Prostate gland (tissue), 2 donors: ENCODE measurements at regions of chrX and their contacts with region 1.

Region 1: GRCh38 chrX:2145692-2146367 is 354.9 kb downstream of the DHRSX start:
- DNase-seq: no peak
- H3K4me3 ChIP-seq: no peak overlapping the region
- H3K27ac ChIP-seq: no peak overlapping the region
- H3K4me1 ChIP-seq: no peaks in the 10 kb centered on the region
- H3K27me3 ChIP-seq: no peaks in the 10 kb centered on the region
- CTCF ChIP-seq: no peak
- POLR2A ChIP-seq: no peak

Region 2: DNA sequence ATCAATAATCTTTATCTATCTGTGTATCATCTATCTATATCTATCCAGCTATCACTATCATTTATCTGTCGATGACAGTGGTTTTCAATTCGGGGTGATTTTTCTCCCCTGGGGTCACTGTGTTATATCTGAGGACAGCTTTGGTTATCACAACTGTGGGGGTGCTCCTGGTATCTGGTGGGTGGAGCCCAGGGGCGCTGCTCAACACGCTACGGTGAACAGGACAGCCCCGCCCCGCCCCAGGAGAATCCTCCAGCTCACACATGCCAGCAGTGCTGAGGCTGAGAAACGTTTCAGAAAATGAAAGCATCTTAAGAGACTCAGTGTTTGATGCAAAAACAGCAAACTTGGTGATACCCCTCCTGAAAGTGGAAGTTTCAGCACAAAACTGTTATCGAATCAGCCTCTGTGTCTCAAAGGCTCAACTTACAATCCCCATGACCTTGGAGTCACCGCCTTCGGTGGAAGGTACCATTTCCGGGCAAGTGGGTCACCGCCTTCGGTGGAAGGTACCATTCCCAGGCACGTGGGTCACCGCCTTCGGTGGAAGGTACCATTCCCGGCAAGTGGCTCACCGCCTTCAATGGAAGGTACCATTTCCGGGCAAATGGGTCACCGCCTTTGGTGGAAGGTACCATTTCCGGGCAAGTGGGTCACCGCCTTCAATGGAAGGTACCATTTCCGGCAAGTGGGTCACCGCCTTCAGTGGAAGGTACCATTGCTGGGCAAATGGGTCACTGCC is 39.7 kb after region 1 on chrX:
- intact Hi-C with region 1: loop called (anchors 2 kb)
- DNase-seq: no peak
- H3K4me3 ChIP-seq: no peak overlapping the region
- H3K27ac ChIP-seq: no peak overlapping the region
- H3K4me1 ChIP-seq: no peaks in the 10 kb centered on the region
- H3K27me3 ChIP-seq: no peaks in the 10 kb centered on the region
- CTCF ChIP-seq: no peak
- POLR2A ChIP-seq: no peak